ENCODE measurements at regions of chr13 and their contacts with region 1.

Region 1: GRCh38 chr13:27406178-27406939 is 18.1 kb upstream of the GTF3A start:
- DNase-seq: no peak
- ATAC-seq: peak; percentile 38

Region 2: GRCh38 chr13:27219611-27220010 is 186.7 kb before region 1 on chr13:
- intact Hi-C with region 1: no loop called
- DNase-seq: no peak
- ATAC-seq: no peak

Region 3: DNA sequence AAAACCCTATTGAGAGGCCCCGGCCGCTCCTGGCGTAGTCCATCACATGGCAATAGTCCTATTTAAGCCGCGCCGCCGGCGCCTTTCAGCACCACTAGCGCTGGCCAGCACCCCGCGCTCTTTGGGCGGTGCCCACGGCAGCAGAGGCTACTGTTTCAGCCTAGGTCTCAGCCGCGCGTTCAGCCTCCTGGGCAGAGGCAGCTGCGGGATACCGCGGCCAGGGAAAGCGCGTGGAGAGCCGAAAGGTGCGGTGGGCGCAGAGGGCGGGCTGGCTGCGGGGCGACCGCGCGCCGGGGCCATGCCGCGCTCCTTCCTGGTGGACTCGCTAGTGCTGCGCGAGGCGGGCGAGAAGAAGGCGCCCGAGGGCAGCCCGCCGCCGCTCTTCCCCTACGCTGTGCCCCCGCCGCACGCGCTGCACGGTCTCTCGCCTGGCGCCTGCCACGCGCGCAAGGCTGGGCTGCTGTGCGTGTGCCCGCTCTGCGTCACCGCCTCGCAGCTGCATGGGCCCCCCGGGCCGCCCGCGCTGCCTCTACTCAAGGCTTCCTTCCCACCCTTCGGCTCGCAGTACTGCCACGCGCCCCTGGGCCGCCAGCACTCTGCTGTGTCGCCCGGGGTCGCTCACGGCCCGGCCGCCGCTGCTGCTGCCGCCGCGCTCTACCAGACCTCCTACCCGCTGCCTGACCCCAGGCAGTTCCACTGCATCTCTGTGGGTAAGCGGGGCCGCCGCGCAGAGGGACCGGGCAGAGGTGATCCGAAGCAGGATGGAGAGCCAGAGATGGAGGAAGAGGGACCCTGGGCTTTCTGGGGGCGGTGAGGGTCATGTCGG is 386.2 kb after region 1 on chr13 and contains the start of gene GSX1:
- intact Hi-C with region 1: loop called (anchors 10 kb)
- DNase-seq: peak; percentile 80
- ATAC-seq: peak; percentile 97
- total RNA-seq, gene GSX1: not detected